ENCODE measurements at regions of chr9 and their contacts with region 1.

Region 1: GRCh38 chr9:113578882-113579282 is 115.4 kb downstream of the RGS3 start:
- DNase-seq: peak; percentile 72 to 92 (median 81)
- H3K4me3 ChIP-seq: peak overlapping the region in 1 of 2 donors; percentile 47
- H3K4me3 Mint-ChIP-seq: peak overlapping the region; percentile 71 to 92 (median 82)
- H3K27ac ChIP-seq: peak overlapping the region; percentile 69
- H3K27ac Mint-ChIP-seq: peak overlapping the region; percentile 88 to 97 (median 96)
- H3K4me1 ChIP-seq: peaks cover 65% of the 10 kb centered on the region
- H3K4me1 Mint-ChIP-seq: peaks cover 57 to 88% (median 75%) of the 10 kb centered on the region in 4 donors
- H3K27me3 ChIP-seq: no peaks in the 10 kb centered on the region
- H3K27me3 Mint-ChIP-seq: no peaks in the 10 kb centered on the region

Region 2: GRCh38 chr9:113401027-113401792 is 177.7 kb before region 1 on chr9 and contains the start of gene ALAD:
- CTCF ChIA-PET with region 1: interaction called, 46 read pairs
- POLR2A ChIA-PET with region 1: interaction called, 18 read pairs
- intact Hi-C with region 1: loop called (anchors 1 kb)
- DNase-seq: peak; percentile 98 to 100 (median 99)
- H3K4me3 ChIP-seq: peak within 1 kb of the TSS; percentile 34 to 96
- H3K4me3 Mint-ChIP-seq: peak within 1 kb of the TSS; percentile 91 to 98 (median 94)
- H3K27ac ChIP-seq: peak within 1 kb of the TSS; percentile 52
- H3K27ac Mint-ChIP-seq: peak within 1 kb of the TSS; percentile 77 to 94 (median 89)
- H3K4me1 ChIP-seq: peaks cover 16% of the 10 kb centered on the region
- H3K4me1 Mint-ChIP-seq: peaks cover 14 to 31% (median 23%) of the 10 kb centered on the region in 4 donors
- H3K27me3 ChIP-seq: no peaks in the 10 kb centered on the region
- H3K27me3 Mint-ChIP-seq: no peaks in the 10 kb centered on the region
- total RNA-seq, gene ALAD: 39.9 TPM

Region 3: GRCh38 chr9:113511856-113512761 is 66.8 kb before region 1 on chr9:
- CTCF ChIA-PET with region 1: interaction called, 34 read pairs
- POLR2A ChIA-PET with region 1: interaction called, 342 read pairs
- intact Hi-C with region 1: loop called (anchors 1 kb)
- DNase-seq: peak; percentile 57 to 90 (median 62)
- H3K4me3 ChIP-seq: peak overlapping the region in 1 of 2 donors; percentile 21
- H3K4me3 Mint-ChIP-seq: peak overlapping the region; percentile 73 to 91 (median 84)
- H3K27ac ChIP-seq: peak overlapping the region; percentile 57
- H3K27ac Mint-ChIP-seq: peak overlapping the region; percentile 89 to 96 (median 93)
- H3K4me1 ChIP-seq: peaks cover 60% of the 10 kb centered on the region
- H3K4me1 Mint-ChIP-seq: peaks cover 39 to 68% (median 54%) of the 10 kb centered on the region in 4 donors
- H3K27me3 ChIP-seq: no peaks in the 10 kb centered on the region
- H3K27me3 Mint-ChIP-seq: no peaks in the 10 kb centered on the region

Region 4: GRCh38 chr9:113548221-113549041 is 30.5 kb before region 1 on chr9:
- CTCF ChIA-PET with region 1: interaction called, 16 read pairs
- POLR2A ChIA-PET with region 1: interaction called, 3 read pairs
- intact Hi-C with region 1: no loop called
- DNase-seq: no peak
- H3K4me3 ChIP-seq: no peak overlapping the region
- H3K4me3 Mint-ChIP-seq: peak overlapping the region in 4 of 8 donors; percentile 26 to 65 (median 50)
- H3K27ac ChIP-seq: peak overlapping the region; percentile 31
- H3K27ac Mint-ChIP-seq: peak overlapping the region; percentile 74 to 91 (median 89)
- H3K4me1 ChIP-seq: peaks cover 31% of the 10 kb centered on the region
- H3K4me1 Mint-ChIP-seq: peaks cover 24 to 50% (median 31%) of the 10 kb centered on the region in 4 donors
- H3K27me3 ChIP-seq: no peaks in the 10 kb centered on the region
- H3K27me3 Mint-ChIP-seq: no peaks in the 10 kb centered on the region

Region 5: DNA sequence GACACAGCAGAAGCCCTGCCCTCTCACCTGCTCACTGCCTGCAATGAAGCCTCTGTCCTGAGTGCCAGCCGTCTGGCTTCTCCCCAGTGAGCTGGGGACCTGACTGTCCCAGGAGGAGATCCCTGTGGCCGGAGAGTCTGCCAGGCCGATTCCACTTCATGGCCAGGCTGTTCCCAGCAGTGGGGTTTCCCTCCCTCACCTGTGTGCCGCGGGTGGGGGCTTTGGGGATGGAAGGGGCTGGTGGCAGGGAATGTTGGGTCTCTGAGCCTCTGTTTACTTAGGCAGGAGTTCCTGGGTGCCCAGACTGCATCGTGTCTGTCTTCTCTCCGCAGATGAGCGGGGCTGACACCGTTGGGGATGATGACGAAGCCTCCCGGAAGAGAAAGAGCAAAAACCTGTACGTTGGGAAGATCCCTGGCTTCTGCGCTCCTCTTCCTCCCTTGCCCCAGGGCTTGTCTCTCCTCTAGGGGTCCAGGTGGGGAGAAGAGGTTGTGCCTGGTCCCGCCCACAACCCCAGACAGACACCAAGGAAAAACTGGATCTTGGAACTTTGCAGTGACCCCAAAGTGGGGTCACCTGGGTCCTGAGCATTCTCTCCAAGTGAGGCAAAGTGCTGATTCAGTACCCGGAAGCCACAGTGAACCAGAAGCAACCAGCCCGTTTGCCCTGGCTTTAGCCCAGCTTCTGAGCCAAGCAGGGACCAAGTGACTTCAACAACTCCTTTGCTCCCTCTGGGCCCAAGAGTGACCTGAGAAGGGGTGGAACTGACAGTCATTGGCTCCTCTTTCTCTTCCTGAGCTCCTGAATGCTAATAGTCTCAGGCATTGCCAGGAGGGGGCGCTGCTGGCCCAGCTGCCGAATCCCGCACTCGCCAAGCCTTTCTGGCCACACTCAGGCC is 12.4 kb after region 1 on chr9:
- CTCF ChIA-PET with region 1: interaction called, 84 read pairs
- POLR2A ChIA-PET with region 1: interaction called, 10 read pairs
- intact Hi-C with region 1: loop called (anchors 1 kb)
- DNase-seq: peak in 4 of 5 donors; percentile 25 to 33 (median 28)
- H3K4me3 ChIP-seq: no peak overlapping the region
- H3K4me3 Mint-ChIP-seq: no peak overlapping the region
- H3K27ac ChIP-seq: no peak overlapping the region
- H3K27ac Mint-ChIP-seq: peak overlapping the region in 3 of 7 donors; percentile 41 to 74 (median 73)
- H3K4me1 ChIP-seq: peaks cover 17% of the 10 kb centered on the region
- H3K4me1 Mint-ChIP-seq: peaks cover 18 to 46% (median 25%) of the 10 kb centered on the region in 4 donors
- H3K27me3 ChIP-seq: no peaks in the 10 kb centered on the region
- H3K27me3 Mint-ChIP-seq: no peaks in the 10 kb centered on the region

Region 6: DNA sequence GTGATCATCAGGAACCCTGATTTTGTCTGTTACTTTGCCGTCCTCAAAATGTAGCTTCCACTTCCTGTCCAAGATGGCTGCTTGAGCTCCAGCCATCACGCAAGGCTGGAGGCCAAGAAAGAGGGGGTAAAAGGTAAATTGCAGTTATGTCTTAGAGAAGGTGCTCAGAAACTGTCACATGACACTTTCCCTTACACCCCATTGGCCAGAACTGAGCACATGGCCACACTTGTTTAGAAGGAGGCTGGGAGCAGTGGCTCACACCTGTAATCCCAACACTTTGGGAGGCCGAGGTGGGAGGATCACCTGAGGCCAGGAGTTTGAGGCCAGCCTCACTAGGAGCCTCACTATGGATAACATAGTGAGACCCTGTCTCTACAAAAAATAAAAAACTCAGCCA is 25.5 kb after region 1 on chr9:
- CTCF ChIA-PET with region 1: no interaction called
- POLR2A ChIA-PET with region 1: no interaction called
- intact Hi-C with region 1: no loop called
- DNase-seq: no peak
- H3K4me3 ChIP-seq: no peak overlapping the region
- H3K4me3 Mint-ChIP-seq: no peak overlapping the region
- H3K27ac ChIP-seq: no peak overlapping the region
- H3K27ac Mint-ChIP-seq: peak overlapping the region in 1 of 7 donors; percentile 19
- H3K4me1 ChIP-seq: no peaks in the 10 kb centered on the region
- H3K4me1 Mint-ChIP-seq: peaks cover 0 to 2% (median under 1%) of the 10 kb centered on the region in 4 donors
- H3K27me3 ChIP-seq: no peaks in the 10 kb centered on the region
- H3K27me3 Mint-ChIP-seq: no peaks in the 10 kb centered on the region

Region 7: DNA sequence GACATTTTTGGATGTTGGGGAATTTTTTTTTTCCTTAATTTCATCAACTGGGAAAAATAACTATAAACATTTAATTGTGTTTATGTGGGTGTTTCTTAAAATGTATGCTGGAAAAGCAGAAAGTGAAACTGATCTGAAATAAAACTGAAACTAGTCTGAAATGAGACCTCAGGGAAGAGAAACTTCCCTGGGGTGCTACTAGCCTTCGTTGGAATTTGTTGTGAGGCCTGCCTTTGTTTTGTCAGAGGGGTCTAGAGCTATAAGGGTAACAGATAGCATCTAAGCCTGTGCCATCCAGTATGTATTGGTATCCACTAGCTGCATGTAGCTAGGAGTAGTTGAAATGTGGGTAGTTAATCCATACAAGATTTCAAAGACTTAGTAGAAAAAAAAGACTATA is 307.6 kb after region 1 on chr9:
- CTCF ChIA-PET with region 1: no interaction called
- POLR2A ChIA-PET with region 1: no interaction called
- intact Hi-C with region 1: no loop called
- DNase-seq: no peak
- H3K4me3 ChIP-seq: no peak overlapping the region
- H3K4me3 Mint-ChIP-seq: peak overlapping the region; percentile 56 to 85 (median 74)
- H3K27ac ChIP-seq: no peak overlapping the region
- H3K27ac Mint-ChIP-seq: peak overlapping the region in 3 of 7 donors; percentile 54 to 76 (median 65)
- H3K4me1 ChIP-seq: peaks cover 12% of the 10 kb centered on the region
- H3K4me1 Mint-ChIP-seq: peaks cover 10 to 30% (median 15%) of the 10 kb centered on the region in 4 donors
- H3K27me3 ChIP-seq: no peaks in the 10 kb centered on the region
- H3K27me3 Mint-ChIP-seq: no peaks in the 10 kb centered on the region